H1 (cell line): ENCODE measurements at regions of chr3 and their contacts with region 1.

Region 1: DNA sequence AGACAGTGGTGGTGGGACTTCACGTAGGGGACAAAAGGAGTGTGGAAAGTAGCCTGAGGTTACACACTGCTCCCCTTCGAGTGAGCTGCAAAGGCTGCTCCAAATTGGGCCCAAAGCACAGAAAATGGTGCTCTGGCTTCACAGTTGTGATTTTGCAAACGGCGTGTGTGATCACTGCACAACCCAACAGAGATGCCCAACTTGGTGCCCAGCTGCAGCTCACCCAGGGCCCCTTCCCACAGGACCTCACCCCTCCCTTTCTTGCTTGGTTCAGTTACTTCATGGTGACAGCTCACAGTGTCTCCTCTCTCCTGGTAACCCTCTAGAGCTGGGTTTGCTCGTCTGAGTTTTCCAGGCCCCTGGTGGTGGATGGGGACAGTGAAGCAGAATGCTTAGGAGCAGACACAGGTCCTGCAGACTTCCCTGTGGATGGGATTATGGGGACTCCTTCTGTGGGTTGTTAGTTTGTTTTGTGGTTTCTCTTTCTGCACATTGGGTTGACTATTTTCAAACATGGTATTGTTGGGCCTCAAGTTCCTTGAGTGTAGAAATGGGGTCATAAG is 98.3 kb downstream of the TOP2B start:
- DNase-seq: no peak
- H3K4me3 ChIP-seq: no peak overlapping the region
- H3K27ac ChIP-seq: no peak overlapping the region
- H3K4me1 ChIP-seq: no peaks in the 10 kb centered on the region
- H3K27me3 ChIP-seq: no peaks in the 10 kb centered on the region
- CTCF ChIP-seq: peak; percentile 10 to 32 (median 22); a peak in 2 of 4 replicates
- EP300 ChIP-seq: no peak
- POLR2A ChIP-seq: no peak
- RAD21 ChIP-seq: peak; percentile 8 to 37; a peak in 2 of 4 replicates

Region 2: DNA sequence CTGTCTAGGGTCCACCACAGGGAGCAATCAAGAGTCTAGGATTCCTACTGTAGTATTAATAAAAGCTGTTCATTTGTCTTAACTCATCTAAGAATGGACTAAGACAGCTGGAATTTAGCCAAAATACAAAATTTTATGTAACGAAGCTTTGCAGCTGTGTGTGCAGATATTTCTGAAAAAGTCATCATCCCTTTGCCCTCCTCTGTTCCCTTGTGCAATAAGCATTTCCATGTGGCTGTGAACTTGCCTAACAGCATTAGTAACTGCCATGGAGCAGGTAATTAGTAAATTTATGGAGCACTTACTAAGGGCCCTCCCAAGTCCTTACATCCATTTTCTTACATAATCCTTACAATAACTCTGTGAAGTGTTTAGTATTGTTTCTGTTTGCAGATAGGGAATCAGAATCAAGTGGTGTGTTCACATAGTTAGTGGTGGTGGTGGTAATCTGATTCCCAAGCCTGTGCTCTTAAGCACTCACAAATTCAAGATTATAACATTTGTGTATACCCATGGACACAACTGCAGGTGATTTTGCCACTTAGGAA is 23.9 kb before region 1 on chr3:
- CTCF ChIA-PET with region 1: interaction called, 11 read pairs
- POLR2A ChIA-PET with region 1: no interaction called
- DNase-seq: no peak
- H3K4me3 ChIP-seq: no peak overlapping the region
- H3K27ac ChIP-seq: no peak overlapping the region
- H3K4me1 ChIP-seq: no peaks in the 10 kb centered on the region
- H3K27me3 ChIP-seq: no peaks in the 10 kb centered on the region
- CTCF ChIP-seq: no peak
- EP300 ChIP-seq: no peak
- POLR2A ChIP-seq: no peak
- RAD21 ChIP-seq: no peak

Region 3: DNA sequence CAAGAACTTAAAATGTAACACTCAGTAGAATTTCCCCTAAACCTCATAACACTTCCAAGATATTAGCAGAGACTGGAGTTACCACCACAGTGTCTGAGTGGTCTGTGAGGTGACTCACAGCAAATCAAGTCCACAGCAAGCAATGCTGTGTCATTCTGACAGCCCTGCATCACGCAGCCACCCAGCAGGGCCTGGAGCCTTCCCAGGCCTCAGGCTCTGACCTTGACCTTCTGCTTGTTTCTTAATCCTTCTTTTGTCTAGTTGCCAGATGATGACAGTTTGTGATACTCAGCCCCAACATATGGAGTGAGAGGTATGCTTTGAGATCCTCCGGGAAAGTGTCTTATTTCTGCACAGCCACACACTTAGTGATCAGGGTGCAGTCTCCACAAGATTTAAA is 15.8 kb after region 1 on chr3:
- CTCF ChIA-PET with region 1: interaction called, 138 read pairs
- POLR2A ChIA-PET with region 1: no interaction called
- DNase-seq: no peak
- H3K4me3 ChIP-seq: no peak overlapping the region
- H3K27ac ChIP-seq: no peak overlapping the region
- H3K4me1 ChIP-seq: no peaks in the 10 kb centered on the region
- H3K27me3 ChIP-seq: no peaks in the 10 kb centered on the region
- CTCF ChIP-seq: no peak
- EP300 ChIP-seq: no peak
- POLR2A ChIP-seq: no peak
- RAD21 ChIP-seq: no peak

Region 4: DNA sequence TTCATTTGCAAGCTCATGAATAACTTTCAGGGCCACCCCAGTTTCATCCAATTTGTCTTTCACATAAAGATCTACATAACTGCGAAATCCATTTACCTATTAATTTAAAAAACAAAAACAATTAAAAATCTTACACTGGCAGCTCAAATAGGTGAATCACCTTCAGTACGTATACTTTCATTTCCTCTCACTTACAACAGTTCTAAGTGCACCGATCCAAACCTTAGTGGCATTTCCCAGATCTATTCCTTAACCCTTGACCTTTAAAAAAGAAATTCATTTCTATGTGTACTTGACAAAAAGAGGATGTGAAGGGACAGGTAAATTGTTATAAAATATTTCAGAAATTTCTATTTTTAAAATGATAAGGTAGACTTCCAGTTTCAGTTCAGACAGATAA is 67.5 kb after region 1 on chr3:
- CTCF ChIA-PET with region 1: no interaction called
- POLR2A ChIA-PET with region 1: no interaction called
- DNase-seq: no peak
- H3K4me3 ChIP-seq: no peak overlapping the region
- H3K27ac ChIP-seq: no peak overlapping the region
- H3K4me1 ChIP-seq: no peaks in the 10 kb centered on the region; a peak in 2 of 7 replicates
- H3K27me3 ChIP-seq: no peaks in the 10 kb centered on the region
- CTCF ChIP-seq: no peak
- EP300 ChIP-seq: no peak
- POLR2A ChIP-seq: no peak
- RAD21 ChIP-seq: no peak

Region 5: DNA sequence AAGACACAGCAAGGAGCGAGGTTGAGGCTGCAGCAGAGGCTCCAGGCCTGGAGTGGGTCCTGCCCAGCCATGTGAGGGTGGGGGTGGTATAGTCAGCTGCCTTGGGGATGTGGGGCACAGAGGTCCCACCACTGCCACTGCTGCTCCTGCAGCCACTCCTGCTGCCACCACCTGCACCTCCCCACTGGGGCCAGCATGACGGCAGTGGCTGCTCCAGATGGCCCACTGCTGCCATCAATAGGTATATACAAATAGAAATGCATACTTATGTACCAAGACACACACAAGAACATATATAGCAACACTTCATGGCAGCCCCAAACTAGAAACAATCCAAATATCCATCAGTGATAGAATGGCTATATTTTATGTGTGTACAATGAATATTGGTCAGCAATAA is 108.2 kb after region 1 on chr3:
- CTCF ChIA-PET with region 1: no interaction called
- POLR2A ChIA-PET with region 1: no interaction called
- DNase-seq: no peak
- H3K4me3 ChIP-seq: no peak overlapping the region
- H3K27ac ChIP-seq: no peak overlapping the region
- H3K4me1 ChIP-seq: no peaks in the 10 kb centered on the region; a peak in 1 of 7 replicates
- H3K27me3 ChIP-seq: no peaks in the 10 kb centered on the region
- CTCF ChIP-seq: no peak
- EP300 ChIP-seq: no peak
- POLR2A ChIP-seq: no peak
- RAD21 ChIP-seq: no peak